ENCODE measurements at regions of chr18 and their contacts with region 1.

Region 1: GRCh38 chr18:70205421-70206397 is at the start of gene RTTN:
- DNase-seq: peak; percentile 87 to 95 (median 91)
- ATAC-seq: peak; percentile 92
- H3K4me3 ChIP-seq: peak within 1 kb of the TSS; percentile 85
- H3K4me3 Mint-ChIP-seq: peak within 1 kb of the TSS; percentile 98
- H3K27ac ChIP-seq: peak within 1 kb of the TSS; percentile 87 to 93
- H3K27ac Mint-ChIP-seq: peak within 1 kb of the TSS; percentile 96
- H3K4me1 ChIP-seq: peaks cover 9% of the 10 kb centered on the region
- H3K4me1 Mint-ChIP-seq: peaks cover 37% of the 10 kb centered on the region
- H3K27me3 ChIP-seq: no peaks in the 10 kb centered on the region
- H3K27me3 Mint-ChIP-seq: no peaks in the 10 kb centered on the region
- CTCF ChIP-seq: no peak
- total RNA-seq, gene RTTN: 21.4 to 25.5 TPM

Region 2: GRCh38 chr18:68714609-68715496 is 1490.9 kb before region 1 on chr18 and contains the start of gene TMX3:
- CTCF ChIA-PET with region 1: no interaction called
- POLR2A ChIA-PET with region 1: no interaction called
- intact Hi-C with region 1: loop called (anchors 1 kb)
- DNase-seq: peak; percentile 81 to 97 (median 90)
- ATAC-seq: peak; percentile 98
- H3K4me3 ChIP-seq: peak within 1 kb of the TSS; percentile 81
- H3K4me3 Mint-ChIP-seq: peak within 1 kb of the TSS; percentile 99
- H3K27ac ChIP-seq: peak within 1 kb of the TSS; percentile 16 to 36
- H3K27ac Mint-ChIP-seq: peak within 1 kb of the TSS; percentile 90
- H3K4me1 ChIP-seq: peaks cover 23% of the 10 kb centered on the region
- H3K4me1 Mint-ChIP-seq: peaks cover 55% of the 10 kb centered on the region
- H3K27me3 ChIP-seq: no peaks in the 10 kb centered on the region
- H3K27me3 Mint-ChIP-seq: no peaks in the 10 kb centered on the region
- CTCF ChIP-seq: no peak
- total RNA-seq, gene TMX3: 30.9 to 33.3 TPM

Region 3: DNA sequence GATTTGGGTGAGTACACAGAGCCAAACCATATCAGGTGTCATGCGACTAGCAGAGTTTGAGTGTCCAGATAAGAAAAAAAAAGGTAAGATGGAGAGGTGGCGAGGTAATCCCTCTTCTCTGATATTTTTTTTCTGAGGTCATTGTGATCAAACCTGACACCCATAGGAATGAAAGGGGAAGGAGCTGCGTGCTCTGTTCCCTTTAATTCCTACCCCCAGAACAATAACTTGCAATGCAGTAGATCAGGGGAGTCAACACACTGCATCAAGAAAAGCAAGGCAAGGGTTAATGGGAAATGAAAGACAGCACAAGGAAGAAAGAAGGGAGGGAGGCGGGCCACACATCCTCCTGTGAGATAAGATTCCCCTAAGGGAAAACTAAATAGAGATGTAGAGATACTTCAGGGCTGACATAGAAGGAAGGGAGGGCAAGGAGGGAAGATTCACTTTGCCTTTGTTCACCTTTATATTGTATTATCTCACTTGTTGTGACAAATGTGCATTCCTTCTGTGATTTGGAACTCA is 390.8 kb before region 1 on chr18:
- CTCF ChIA-PET with region 1: no interaction called
- POLR2A ChIA-PET with region 1: no interaction called
- intact Hi-C with region 1: no loop called
- DNase-seq: no peak
- ATAC-seq: no peak
- H3K4me3 ChIP-seq: no peak overlapping the region
- H3K4me3 Mint-ChIP-seq: no peak overlapping the region
- H3K27ac ChIP-seq: no peak overlapping the region
- H3K27ac Mint-ChIP-seq: no peak overlapping the region
- H3K4me1 ChIP-seq: no peaks in the 10 kb centered on the region
- H3K4me1 Mint-ChIP-seq: no peaks in the 10 kb centered on the region
- H3K27me3 ChIP-seq: no peaks in the 10 kb centered on the region
- H3K27me3 Mint-ChIP-seq: no peaks in the 10 kb centered on the region
- CTCF ChIP-seq: no peak

Region 4: DNA sequence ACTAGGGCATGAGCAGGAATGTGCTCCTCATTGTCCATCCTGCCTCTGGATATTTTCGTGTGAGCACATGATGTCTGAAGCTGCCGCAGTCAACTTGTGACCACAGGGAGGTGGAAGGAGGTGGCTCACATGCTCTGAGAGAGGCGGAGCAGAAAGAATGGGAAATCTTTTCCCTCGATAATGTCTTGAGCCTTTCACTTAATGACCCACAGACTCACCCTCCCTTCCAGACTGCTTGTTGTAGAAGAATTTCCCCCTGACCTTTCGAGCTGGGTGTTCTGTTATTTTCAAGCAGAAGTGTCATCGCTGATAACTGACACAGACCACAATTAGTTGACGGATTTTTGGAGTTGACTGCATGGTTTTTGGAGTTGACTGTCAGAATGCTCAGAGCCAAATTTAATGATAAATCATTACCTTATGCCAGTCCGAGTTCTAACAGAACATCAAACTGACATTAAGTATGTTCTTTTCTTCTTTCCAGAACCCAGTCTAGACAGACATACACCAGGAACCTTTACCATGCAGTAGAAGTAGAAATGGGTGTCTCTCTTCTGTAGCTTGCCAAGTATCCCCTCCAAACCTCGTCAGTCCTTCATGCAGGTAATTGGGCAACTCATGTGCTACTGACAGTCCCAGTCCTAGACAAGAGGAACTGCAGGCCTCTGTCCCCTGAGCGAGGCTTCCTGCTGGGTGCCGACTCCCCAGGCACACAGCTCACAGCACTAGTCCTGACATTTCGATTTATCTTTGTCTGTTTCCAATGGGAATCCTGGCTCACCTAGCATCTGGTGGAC is 29.2 kb after region 1 on chr18:
- CTCF ChIA-PET with region 1: no interaction called
- POLR2A ChIA-PET with region 1: no interaction called
- intact Hi-C with region 1: no loop called
- DNase-seq: no peak
- ATAC-seq: no peak
- H3K4me3 ChIP-seq: no peak overlapping the region
- H3K4me3 Mint-ChIP-seq: no peak overlapping the region
- H3K27ac ChIP-seq: no peak overlapping the region
- H3K27ac Mint-ChIP-seq: no peak overlapping the region
- H3K4me1 ChIP-seq: no peaks in the 10 kb centered on the region
- H3K4me1 Mint-ChIP-seq: no peaks in the 10 kb centered on the region
- H3K27me3 ChIP-seq: peaks cover 4 to 7% of the 10 kb centered on the region in 2 experiments
- H3K27me3 Mint-ChIP-seq: peaks cover 62% of the 10 kb centered on the region
- CTCF ChIP-seq: no peak